ENCODE measurements at regions of chr2 and their contacts with region 1.

Region 1: GRCh38 chr2:118686369-118686768 is 161.1 kb downstream of the EN1 start:
- DNase-seq: no peak
- H3K4me3 ChIP-seq: no peak overlapping the region
- CTCF ChIP-seq: no peak

Region 2: GRCh38 chr2:118723394-118723793 is 37.0 kb after region 1 on chr2:
- in situ Hi-C with region 1: loop called (anchors 5 kb)
- DNase-seq: peak; percentile 8
- H3K4me3 ChIP-seq: no peak overlapping the region
- CTCF ChIP-seq: no peak